PC-9 (cell line): ENCODE measurements at regions of chr17 and their contacts with region 1.

Region 1: DNA sequence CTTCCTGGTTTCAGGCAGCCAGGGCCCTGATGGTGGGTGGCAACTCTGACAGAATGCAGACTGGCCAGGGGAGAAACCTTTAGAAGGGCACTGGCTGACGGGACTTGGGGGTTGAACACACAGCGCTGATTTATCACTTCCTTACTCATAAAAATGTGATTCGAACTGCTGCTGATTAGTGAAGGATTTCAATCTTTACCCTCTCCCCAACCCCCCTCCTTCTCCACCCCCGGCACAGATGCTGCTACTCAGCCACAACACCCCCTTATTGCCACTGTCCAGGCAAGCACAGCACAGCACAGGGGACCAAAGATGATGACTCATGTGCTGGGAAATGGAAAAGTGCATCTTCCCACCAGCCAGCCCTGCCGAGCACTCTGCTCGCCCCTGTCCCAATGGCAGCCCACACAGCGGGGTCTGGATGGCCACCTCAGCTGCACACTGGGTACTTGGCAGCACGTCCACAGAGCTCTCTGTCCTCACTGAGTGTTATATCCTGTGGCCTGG is 70.1 kb downstream of the SMG6 start:
- DNase-seq: no peak
- H3K4me3 ChIP-seq: no peak overlapping the region
- H3K27ac ChIP-seq: no peak overlapping the region
- H3K4me1 ChIP-seq: no peaks in the 10 kb centered on the region
- H3K27me3 ChIP-seq: no peaks in the 10 kb centered on the region
- CTCF ChIP-seq: no peak

Region 2: GRCh38 chr17:661509-661908 is 1572.0 kb before region 1 on chr17:
- CTCF ChIA-PET with region 1: no interaction called
- POLR2A ChIA-PET with region 1: no interaction called
- intact Hi-C with region 1: no loop called
- DNase-seq: no peak
- H3K4me3 ChIP-seq: no peak overlapping the region
- H3K27ac ChIP-seq: no peak overlapping the region
- H3K4me1 ChIP-seq: no peaks in the 10 kb centered on the region
- H3K27me3 ChIP-seq: no peaks in the 10 kb centered on the region
- CTCF ChIP-seq: no peak

Region 3: GRCh38 chr17:2064980-2065785 is 168.3 kb before region 1 on chr17:
- CTCF ChIA-PET with region 1: interaction called, 10 read pairs
- POLR2A ChIA-PET with region 1: no interaction called
- intact Hi-C with region 1: no loop called
- DNase-seq: no peak
- H3K4me3 ChIP-seq: no peak overlapping the region
- H3K27ac ChIP-seq: no peak overlapping the region
- H3K4me1 ChIP-seq: no peaks in the 10 kb centered on the region
- H3K27me3 ChIP-seq: no peaks in the 10 kb centered on the region
- CTCF ChIP-seq: peak; percentile 49